Body of pancreas (tissue), 4 donors: ENCODE measurements at regions of chr6 and their contacts with region 1.

Region 1: GRCh38 chr6:71383901-71384489 is 95.4 kb downstream of the OGFRL1 start:
- DNase-seq: no peak
- ATAC-seq: peak; percentile 47
- H3K4me3 ChIP-seq: no peak overlapping the region
- H3K27ac ChIP-seq: peak overlapping the region in 2 of 4 donors; percentile 3 to 37
- H3K4me1 ChIP-seq: peaks cover 32% of the 10 kb centered on the region
- H3K27me3 ChIP-seq: no peaks in the 10 kb centered on the region
- CTCF ChIP-seq: peak; percentile 49 to 67 (median 65)
- POLR2A ChIP-seq: no peak

Region 2: GRCh38 chr6:71299541-71300470 is 84.2 kb before region 1 on chr6:
- intact Hi-C with region 1: no loop called
- DNase-seq: no peak
- ATAC-seq: no peak
- H3K4me3 ChIP-seq: no peak overlapping the region
- H3K27ac ChIP-seq: no peak overlapping the region
- H3K4me1 ChIP-seq: no peaks in the 10 kb centered on the region
- H3K27me3 ChIP-seq: no peaks in the 10 kb centered on the region
- CTCF ChIP-seq: no peak
- POLR2A ChIP-seq: no peak

Region 3: DNA sequence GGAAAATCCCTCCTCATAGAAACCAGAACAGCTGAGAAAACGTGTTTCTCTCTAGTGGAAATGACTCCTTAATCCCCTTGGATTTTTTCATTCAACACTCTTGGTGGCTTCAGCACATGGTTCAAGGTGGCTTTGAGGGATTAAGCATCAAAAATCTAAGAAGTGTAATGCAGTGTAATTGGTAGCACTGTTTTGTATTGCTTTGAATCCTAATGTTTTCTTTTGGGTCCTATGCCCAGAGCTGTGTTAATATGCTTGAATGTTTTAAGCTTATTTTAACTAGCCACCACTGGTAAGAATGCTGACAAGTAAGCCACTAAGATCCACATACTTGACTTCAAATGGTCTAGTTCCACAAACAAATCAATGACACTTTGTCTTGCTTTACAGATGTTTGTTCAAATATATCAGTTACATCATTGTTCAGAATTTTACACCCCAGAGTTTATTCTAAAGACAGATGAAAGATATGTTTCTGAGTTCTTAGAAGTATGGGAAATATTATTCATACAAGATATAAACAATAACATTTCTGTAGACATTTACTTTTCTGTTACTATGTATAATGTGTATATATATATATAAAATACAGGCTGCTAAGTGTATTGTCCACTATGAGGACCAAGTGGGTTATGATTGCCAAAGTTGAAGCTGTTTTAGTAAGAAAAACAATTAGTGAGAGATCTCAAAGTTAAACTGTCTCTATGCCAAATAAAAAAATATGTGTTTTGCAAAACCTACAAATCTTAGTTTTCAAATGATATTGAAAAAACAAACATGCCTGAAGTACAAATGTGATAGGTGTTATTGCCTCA is 125.4 kb after region 1 on chr6:
- intact Hi-C with region 1: loop called (anchors 10 kb)
- DNase-seq: no peak
- ATAC-seq: no peak
- H3K4me3 ChIP-seq: no peak overlapping the region
- H3K27ac ChIP-seq: no peak overlapping the region
- H3K4me1 ChIP-seq: no peaks in the 10 kb centered on the region
- H3K27me3 ChIP-seq: no peaks in the 10 kb centered on the region
- CTCF ChIP-seq: no peak
- POLR2A ChIP-seq: no peak

Region 4: GRCh38 chr6:71900642-71901041 is 516.6 kb after region 1 on chr6:
- intact Hi-C with region 1: no loop called
- DNase-seq: no peak
- ATAC-seq: no peak
- H3K4me3 ChIP-seq: no peak overlapping the region
- H3K27ac ChIP-seq: no peak overlapping the region
- H3K4me1 ChIP-seq: no peaks in the 10 kb centered on the region
- H3K27me3 ChIP-seq: no peaks in the 10 kb centered on the region
- CTCF ChIP-seq: no peak
- POLR2A ChIP-seq: no peak